PC-3 (cell line): ENCODE measurements at regions of chr2 and their contacts with region 1.

Region 1: DNA sequence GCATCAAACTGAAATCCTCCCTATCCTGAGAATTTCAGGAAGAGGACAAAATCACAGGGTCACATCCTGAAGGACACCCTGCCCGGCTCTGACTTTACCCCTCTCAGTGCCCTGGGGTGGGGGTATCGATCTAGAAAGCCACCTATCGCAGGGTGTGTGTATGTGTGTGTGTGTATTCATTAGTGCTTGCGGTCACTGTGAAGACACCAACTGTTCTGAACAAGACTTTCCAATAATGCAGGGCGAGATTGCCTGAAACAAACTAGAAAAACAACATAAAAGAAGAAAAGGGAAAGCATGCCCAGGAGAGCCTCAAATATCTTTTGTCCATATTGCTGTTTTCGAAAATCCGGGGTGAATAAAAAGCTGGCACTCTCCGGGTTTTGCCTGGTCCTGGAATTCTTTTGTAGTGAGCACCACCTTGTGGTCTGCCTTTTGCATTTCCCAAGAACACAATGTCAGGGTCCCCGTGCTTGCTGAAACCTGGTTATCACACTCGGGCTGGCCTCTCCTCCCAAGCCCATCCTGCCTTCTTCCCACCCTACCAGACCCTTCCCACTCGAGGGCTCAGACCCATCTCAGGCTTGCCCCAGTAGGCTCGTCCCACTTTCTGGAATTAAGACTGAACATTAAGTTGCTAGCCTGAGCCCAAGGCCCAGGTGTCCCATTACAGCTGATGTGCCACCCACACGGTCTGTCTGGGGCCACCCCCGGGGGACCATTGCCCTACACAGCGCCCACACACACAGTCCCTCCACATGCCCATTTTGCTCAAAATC is 25.0 kb upstream of the COPS8 start:
- DNase-seq: peak; percentile 73
- ATAC-seq: peak; percentile 88
- H3K4me3 ChIP-seq: no peak overlapping the region
- H3K27ac ChIP-seq: no peak overlapping the region
- H3K4me1 ChIP-seq: peaks cover 8% of the 10 kb centered on the region
- H3K27me3 ChIP-seq: no peaks in the 10 kb centered on the region
- CTCF ChIP-seq: peak; percentile 84

Region 2: GRCh38 chr2:236343400-236344161 is 717.1 kb before region 1 on chr2:
- CTCF ChIA-PET with region 1: interaction called, 3 read pairs
- POLR2A ChIA-PET with region 1: no interaction called
- intact Hi-C with region 1: loop called (anchors 2 kb)
- DNase-seq: peak; percentile 79
- ATAC-seq: peak; percentile 55
- H3K4me3 ChIP-seq: no peak overlapping the region
- H3K27ac ChIP-seq: no peak overlapping the region
- H3K4me1 ChIP-seq: no peaks in the 10 kb centered on the region
- H3K27me3 ChIP-seq: no peaks in the 10 kb centered on the region
- CTCF ChIP-seq: peak; percentile 81

Region 3: DNA sequence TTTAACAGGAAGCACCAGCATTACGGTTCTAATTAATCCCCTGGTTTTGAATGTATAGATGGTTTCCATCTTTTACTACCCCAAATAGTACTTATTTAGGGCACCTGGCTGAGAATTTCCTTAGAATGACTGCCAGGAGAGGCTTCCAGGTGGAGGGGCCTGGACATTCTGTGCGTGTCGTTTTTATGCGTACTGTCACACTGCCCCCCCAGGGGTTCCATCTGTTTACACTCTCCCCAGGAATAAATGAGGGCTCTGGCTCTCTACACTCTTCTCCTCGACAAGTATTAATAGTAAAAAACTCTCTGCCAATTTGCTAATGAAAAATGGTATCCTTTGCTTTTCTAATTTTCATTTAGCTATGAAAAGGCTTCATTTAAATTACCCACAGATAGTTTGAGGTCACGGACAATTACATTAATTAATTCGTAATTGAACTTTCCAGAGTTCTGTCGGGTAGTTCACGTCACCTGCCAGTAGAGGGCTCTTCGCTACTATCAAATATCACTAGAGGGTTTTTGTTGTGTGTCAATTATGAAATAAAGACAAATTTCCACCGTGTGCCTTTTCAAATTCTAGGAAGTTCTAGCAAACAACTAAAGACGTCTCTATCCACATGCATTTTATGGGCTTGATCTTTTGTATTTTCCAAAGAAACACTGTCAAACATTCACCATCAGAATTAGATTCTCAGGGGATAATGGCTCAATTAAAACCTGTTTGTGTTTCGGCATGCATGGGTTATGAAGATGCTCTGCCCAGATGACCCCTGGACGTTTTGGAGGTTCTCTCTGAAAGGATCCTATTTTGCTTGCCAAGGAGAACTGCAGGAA is 707.7 kb before region 1 on chr2:
- CTCF ChIA-PET with region 1: no interaction called
- POLR2A ChIA-PET with region 1: no interaction called
- intact Hi-C with region 1: loop called (anchors 1 kb)
- DNase-seq: peak; percentile 52
- ATAC-seq: peak; percentile 46; the same call in 1 of the 2 replicates
- H3K4me3 ChIP-seq: no peak overlapping the region
- H3K27ac ChIP-seq: no peak overlapping the region
- H3K4me1 ChIP-seq: no peaks in the 10 kb centered on the region
- H3K27me3 ChIP-seq: no peaks in the 10 kb centered on the region
- CTCF ChIP-seq: peak; percentile 91

Region 4: DNA sequence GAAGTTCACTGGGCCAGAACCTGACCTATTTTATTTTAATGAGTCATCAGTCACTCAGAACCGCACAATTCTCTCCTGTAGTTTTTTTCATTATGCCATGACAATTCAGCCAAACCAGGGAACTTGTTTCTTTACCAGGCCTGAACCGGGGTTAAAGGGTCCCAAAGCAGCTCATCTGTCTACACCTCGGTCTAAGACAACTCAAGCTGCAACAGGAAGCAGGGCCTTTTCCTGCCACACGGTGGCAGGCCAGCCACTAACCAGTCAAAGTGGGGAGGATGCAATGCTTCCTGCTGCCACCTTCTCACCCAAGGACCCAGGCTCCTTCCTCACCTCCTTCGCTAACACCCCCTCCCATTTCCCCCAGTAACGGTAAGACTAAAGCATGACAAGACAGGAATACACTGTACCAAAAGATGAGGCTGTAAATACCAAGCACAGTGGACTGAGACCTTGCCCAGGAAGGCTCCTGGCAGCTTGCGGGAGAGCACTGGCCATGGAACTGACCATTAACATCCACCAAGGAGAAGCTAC is 547.8 kb before region 1 on chr2:
- CTCF ChIA-PET with region 1: interaction called, 5 read pairs
- POLR2A ChIA-PET with region 1: no interaction called
- intact Hi-C with region 1: loop called (anchors 1 kb)
- DNase-seq: peak; percentile 67
- ATAC-seq: peak; percentile 90
- H3K4me3 ChIP-seq: no peak overlapping the region
- H3K27ac ChIP-seq: no peak overlapping the region
- H3K4me1 ChIP-seq: no peaks in the 10 kb centered on the region
- H3K27me3 ChIP-seq: no peaks in the 10 kb centered on the region
- CTCF ChIP-seq: peak; percentile 86